Aorta (tissue), 5 donors: ENCODE measurements at regions of chr2 and their contacts with region 1.

Region 1: GRCh38 chr2:207473049-207473930 is 56.5 kb upstream of the CREB1 start:
- DNase-seq: no peak
- ATAC-seq: peak; percentile 79
- H3K4me3 ChIP-seq: peak overlapping the region in 1 of 2 donors; percentile 2
- H3K27ac ChIP-seq: no peak overlapping the region
- H3K4me1 ChIP-seq: peaks cover 0 to 2% of the 10 kb centered on the region in 2 donors
- H3K27me3 ChIP-seq: no peaks in the 10 kb centered on the region

Region 2: DNA sequence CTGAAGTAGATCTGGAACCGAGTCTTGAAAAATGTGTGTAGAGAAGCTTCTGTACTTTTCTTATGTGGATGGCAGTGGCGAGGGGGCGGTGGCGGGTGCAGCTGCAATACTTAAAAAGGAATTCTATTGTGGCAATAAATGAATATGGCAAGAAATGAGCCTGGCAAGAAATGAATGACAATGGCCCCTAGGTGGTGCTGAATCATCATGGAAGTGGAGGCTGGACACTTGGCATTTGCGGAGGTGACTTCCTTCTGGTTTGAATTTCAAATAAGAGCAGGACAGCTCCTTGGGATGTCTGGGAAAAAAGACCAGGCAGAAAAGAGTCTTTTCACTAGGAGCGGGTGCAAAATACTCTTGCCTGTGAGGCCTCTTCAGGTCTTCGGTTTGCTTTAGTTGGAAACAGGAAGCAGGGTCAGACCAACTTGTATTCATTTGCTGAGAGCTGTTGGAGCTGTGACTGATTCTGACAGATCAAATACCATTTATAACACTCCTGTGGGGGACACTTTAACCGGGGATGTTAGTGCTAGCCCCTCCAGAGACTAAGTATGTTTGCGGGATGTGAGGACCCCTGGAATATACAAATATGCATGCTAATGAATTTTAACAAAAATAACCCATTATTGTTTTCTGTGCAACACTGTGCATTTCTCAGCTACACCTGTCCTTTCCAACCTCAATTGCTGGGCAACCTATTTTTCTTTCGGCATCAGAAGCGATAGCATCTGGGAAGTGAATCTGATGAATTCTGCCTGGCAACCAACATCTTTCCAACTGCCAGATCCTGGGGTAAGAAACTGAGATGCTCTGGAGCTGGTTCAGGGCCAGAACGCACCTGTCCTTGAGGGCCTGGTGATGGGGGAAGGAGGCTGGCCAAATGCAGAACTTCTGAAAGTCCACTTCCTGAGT is 672.5 kb before region 1 on chr2:
- intact Hi-C with region 1: loop called (anchors 1 to 2 kb)
- DNase-seq: peak; percentile 58 to 78
- ATAC-seq: peak; percentile 77
- H3K4me3 ChIP-seq: no peak overlapping the region
- H3K27ac ChIP-seq: no peak overlapping the region
- H3K4me1 ChIP-seq: no peaks in the 10 kb centered on the region
- H3K27me3 ChIP-seq: no peaks in the 10 kb centered on the region